Gastrocnemius medialis (tissue), 4 donors: ENCODE measurements at regions of chr17 and their contacts with region 1.

Region 1: DNA sequence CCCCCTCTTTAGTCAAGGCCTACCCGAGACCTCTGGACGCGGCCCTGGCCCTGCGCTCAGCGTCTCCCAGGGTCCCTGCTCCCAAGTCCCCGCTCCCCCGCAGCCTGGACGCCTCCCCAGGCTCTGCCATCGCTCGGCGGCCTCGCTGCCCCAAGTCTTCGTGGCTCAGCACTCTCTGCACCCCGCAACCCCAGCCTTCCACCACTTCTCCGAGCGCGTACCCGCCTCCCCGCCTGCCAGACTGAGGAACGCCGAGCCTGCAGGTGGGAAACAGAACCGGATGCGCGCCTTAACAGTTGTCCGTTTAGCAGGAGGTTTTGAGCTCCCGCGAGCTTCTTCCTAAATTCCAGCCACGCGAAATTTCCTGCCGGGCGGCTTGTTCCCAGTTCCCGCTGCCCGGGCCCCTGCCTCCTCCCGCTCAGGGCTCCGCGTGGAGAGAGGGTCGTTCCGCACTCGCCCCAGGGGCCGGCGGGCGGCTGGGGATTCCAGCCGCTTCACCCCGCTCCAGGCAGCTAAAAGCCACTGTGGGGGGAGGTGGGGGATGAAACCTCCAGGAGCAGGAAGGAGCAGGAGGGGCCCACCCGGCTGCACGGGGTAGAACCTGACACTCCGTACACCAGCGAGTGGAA is 87.7 kb downstream of the KCNJ12 start:
- DNase-seq: no peak
- ATAC-seq: no peak
- H3K4me3 ChIP-seq: peak overlapping the region in 1 of 4 donors; percentile 9
- H3K27ac ChIP-seq: no peak overlapping the region
- H3K4me1 ChIP-seq: no peaks in the 10 kb centered on the region
- H3K27me3 ChIP-seq: peaks cover 0 to 6% (median 5%) of the 10 kb centered on the region in 3 donors
- CTCF ChIP-seq: no peak
- POLR2A ChIP-seq: no peak

Region 2: DNA sequence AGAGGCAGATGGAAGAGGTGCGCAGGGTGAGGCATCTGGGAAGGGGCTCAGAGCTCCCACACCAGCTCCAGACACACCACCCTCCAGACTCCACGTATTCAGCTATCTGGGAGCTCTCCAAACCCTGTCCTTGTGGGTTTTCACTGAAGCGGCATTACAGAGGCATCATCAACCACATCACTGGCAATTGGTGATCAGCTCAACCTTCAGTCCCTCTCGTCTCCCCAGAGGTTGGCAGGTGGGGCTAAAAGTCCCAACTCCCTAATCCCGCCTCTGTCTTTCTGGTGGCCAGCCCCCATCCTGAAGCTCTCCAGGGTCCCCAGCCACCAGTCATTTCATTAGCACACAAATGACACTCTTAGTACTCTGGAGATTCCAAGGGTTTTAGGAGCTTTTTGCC is 36.2 kb after region 1 on chr17:
- in situ Hi-C with region 1: loop called in 1 of 4 experiments (anchors 5 kb)
- intact Hi-C with region 1: no loop called
- DNase-seq: no peak
- ATAC-seq: no peak
- H3K4me3 ChIP-seq: no peak overlapping the region
- H3K27ac ChIP-seq: no peak overlapping the region
- H3K4me1 ChIP-seq: no peaks in the 10 kb centered on the region
- H3K27me3 ChIP-seq: no peaks in the 10 kb centered on the region
- CTCF ChIP-seq: no peak
- POLR2A ChIP-seq: no peak